Motor neuron (in vitro differentiated cells): ENCODE measurements at regions of chr6 and their contacts with region 1.

Region 1: GRCh38 chr6:168895102-168895812 is 358.4 kb downstream of the THBS2 start:
- ATAC-seq: peak; percentile 90 to 97 (median 94)
- H3K4me3 ChIP-seq: no peak overlapping the region
- H3K27ac ChIP-seq: no peak overlapping the region
- H3K4me1 ChIP-seq: peaks cover 3 to 4% of the 10 kb centered on the region in 2 donors

Region 2: DNA sequence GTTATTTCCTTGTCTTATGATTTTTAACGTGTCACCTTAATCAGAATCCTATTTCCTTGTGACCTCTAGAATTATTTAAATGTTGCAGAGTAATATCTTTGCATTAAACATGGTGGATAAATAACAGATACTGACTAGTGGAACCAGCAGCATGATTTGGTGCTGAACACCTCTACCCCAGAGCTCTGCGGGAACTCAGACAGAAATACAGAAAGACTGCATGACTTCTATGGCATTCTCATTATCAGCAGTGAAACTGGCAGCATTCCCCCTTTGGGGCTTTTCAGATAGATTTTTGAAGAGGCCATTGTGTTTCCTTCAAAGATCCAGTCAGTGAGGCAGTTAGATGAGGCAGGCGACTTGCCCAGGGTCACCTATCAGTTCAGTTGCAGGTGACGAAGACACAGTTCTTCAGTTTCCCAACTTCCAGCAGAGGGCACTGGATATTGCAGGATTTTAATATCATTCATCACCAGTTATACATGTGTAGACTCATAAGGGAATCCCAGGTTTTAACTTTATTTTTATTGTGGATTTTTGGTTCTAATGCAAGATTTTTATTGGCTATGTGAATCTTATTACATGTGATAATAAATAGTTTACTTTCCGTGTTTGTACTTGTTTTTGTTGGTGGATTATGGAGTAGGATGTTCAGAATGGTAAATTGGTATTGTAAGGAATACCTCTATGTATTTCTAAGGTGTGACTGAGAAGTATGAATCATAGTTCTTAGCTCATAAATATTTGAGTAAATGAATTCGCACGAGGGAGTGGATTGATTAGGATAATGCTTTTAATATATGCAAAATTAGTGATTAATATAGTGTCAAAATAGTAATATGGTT is 987.2 kb before region 1 on chr6:
- in situ Hi-C with region 1: loop called in 1 of 9 experiments (anchors 25 kb)
- ATAC-seq: peak; percentile 39 to 70 (median 50)
- H3K4me3 ChIP-seq: no peak overlapping the region
- H3K27ac ChIP-seq: no peak overlapping the region
- H3K4me1 ChIP-seq: no peaks in the 10 kb centered on the region

Region 3: DNA sequence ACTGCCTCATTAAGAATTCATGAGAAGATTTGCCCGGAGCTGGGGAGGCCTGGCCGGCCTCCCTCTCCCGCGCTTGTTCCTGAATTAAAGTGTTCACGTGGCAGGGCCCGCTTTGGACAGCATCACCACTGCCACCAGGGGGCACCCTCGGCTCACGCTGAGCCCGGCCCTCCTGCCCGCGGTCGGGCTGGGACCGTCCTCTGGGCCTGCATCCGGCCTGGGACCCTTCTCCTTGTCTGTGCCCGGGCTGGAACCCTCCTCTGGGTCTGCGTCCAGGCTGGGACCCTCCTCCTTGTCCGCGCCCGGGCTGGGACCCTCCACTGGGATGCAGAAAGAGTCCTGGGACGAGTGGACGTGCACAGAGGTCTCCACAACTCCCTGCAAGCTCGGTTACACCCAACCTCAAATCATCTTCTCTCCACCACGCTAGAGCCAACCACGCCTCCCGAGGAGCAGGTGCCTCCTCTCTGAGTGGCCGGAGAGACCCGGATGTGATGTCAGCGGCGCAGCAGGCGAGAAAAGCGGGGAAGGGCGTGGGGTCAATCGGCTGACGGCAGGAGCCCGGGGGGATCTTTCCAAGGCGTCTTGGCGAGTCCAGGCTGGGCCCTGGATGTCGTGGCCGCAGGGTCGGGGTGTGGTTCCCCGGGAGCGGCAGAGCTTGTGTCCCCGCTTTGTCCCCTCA is 524.8 kb before region 1 on chr6:
- in situ Hi-C with region 1: loop called in 4 of 9 experiments (anchors 25 kb)
- ATAC-seq: peak in 7 of 8 experiments; percentile 55 to 95 (median 92)
- H3K4me3 ChIP-seq: no peak overlapping the region
- H3K27ac ChIP-seq: no peak overlapping the region
- H3K4me1 ChIP-seq: peaks cover 9 to 25% of the 10 kb centered on the region in 2 donors

Region 4: GRCh38 chr6:168666699-168667425 is 228.4 kb before region 1 on chr6:
- in situ Hi-C with region 1: no loop called
- ATAC-seq: peak in 3 of 8 experiments; percentile 51 to 53 (median 51)
- H3K4me3 ChIP-seq: no peak overlapping the region
- H3K27ac ChIP-seq: no peak overlapping the region
- H3K4me1 ChIP-seq: peaks cover 11 to 18% of the 10 kb centered on the region in 2 donors